ENCODE measurements at regions of chr6 and their contacts with region 1.

Region 1: DNA sequence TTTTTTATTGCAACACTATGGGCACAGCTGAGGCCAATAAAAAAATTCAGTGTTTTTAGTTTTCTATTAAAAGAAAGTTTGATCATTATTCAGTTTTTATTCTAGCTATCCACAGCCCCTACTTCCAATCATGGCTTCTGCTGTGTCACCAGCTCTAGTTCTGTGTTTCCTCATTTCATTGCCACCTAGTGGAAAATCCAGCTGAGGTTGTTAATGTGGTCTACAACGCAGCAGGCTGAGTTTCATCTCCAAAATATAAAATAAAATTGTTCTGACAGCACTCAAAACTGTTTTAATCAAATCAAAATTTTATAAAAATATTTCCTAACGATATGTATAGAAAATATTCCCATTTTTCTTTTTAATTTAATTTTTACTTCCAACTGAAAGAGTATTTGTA is 13.6 kb downstream of the COL9A1 start:
- DNase-seq: no peak
- ATAC-seq: no peak

Region 2: DNA sequence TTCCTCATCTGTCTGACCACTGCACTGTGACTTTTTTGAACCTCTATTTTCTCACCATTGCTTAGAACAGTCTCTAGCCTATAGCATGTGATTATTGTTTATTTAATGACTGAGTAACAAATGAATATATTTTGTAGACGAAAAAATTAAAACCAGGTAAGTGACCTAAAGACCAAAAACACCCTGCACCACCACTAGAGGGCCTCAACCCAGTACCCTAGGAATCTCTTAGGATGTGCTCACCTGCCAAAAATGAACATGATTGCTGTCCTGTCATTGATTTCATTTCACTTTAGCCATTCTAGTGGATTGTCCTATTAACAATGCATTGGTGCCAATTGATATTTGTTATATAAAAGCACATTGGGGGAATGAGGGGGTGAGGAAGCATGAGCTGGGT is 185.5 kb before region 1 on chr6:
- intact Hi-C with region 1: no loop called
- DNase-seq: no peak
- ATAC-seq: no peak

Region 3: DNA sequence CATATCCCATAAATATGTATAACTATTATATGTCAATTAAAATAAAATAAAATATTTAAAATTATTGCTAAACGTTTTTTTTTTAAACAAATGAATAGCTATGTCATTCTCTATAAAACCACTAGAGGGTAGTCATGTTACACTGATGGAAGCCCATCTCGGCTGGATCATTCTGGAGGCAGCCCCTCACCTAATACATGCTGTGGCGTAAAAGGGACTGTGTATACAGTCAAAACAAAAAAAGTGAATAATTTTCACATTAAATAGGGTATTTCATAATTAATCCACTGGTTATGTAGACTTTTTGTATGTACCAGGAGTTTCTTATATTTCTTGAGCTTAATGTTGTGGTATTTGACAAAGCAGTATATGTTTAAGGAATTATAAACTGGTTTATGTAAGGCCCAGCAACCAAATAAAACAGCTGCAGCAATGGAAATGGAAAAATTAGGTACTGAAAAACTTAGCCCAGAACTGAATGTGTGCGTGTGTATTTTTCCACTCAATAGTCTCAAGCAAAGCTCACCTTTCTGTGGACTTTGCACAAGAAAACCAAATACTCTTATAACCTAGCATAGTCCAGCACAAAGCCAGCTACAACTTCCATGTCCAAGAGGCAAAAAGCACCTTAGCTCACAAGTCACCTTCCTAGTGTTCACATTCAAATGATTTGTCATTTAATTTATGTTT is 68.1 kb before region 1 on chr6:
- intact Hi-C with region 1: loop called (anchors 5 kb)
- DNase-seq: no peak
- ATAC-seq: no peak

Measured in Right ventricle myocardium inferior (tissue), 1 donor.